Activated CD4-positive, alpha-beta memory T cell treated with anti-CD3 and anti-CD28 coated beads, Interleukin-2, amount 10 ng/mL, durations not matched to agents 7 days and 5 days (primary cell): ENCODE measurements at regions of chr11 and their contacts with region 1.

Region 1: DNA sequence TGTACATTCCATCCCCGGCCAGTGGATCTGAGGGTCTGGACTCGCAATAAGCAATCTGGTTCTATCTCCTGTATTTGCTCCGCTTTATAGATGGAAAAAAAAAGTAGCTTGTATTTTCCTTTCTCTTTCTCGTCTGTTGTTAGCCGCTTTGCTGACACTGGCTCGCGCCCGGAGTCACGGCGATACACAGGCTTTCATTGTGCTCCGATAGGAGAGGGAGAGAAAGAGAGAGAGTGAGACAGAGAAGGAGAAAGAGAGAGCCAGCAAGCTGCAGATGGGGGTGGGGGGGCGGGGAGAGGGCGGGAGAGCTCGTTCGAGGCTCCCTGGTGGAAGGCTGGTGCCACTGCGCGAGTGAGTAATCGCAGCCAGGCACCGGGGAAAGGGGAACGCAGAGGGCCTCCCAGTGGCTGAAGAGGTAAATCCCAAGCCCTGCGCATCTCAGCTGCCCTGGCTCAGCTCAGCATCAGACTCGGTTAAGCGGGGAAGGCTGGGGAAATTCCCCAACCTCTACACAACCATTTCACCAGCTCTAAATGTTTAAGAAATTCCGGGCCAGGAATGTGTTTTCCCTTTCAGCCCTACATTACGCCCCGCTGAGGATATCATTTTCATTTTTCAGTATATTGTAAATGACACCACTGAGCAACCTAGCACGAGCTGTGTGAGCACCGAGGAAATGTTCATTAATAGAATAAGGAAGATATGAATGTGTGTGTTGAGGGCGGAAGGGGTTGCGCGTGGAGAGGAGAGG is at the start of gene MAML2:
- DNase-seq: peak; percentile 93
- H3K4me3 Mint-ChIP-seq: peak within 1 kb of the TSS; percentile 97
- H3K27ac Mint-ChIP-seq: peak within 1 kb of the TSS; percentile 88
- H3K4me1 Mint-ChIP-seq: peaks cover 28% of the 10 kb centered on the region
- H3K27me3 Mint-ChIP-seq: no peaks in the 10 kb centered on the region
- total RNA-seq, gene MAML2: 19.2 to 19.3 TPM

Region 2: GRCh38 chr11:95829580-95830259 is 513.4 kb before region 1 on chr11:
- CTCF ChIA-PET with region 1: interaction called, 35 read pairs
- POLR2A ChIA-PET with region 1: no interaction called
- DNase-seq: no peak
- H3K4me3 Mint-ChIP-seq: no peak overlapping the region
- H3K27ac Mint-ChIP-seq: no peak overlapping the region
- H3K4me1 Mint-ChIP-seq: peaks cover 3% of the 10 kb centered on the region
- H3K27me3 Mint-ChIP-seq: no peaks in the 10 kb centered on the region

Region 3: GRCh38 chr11:95891423-95892177 is 451.5 kb before region 1 on chr11:
- CTCF ChIA-PET with region 1: no interaction called
- POLR2A ChIA-PET with region 1: no interaction called
- DNase-seq: no peak
- H3K4me3 Mint-ChIP-seq: no peak overlapping the region
- H3K27ac Mint-ChIP-seq: no peak overlapping the region
- H3K4me1 Mint-ChIP-seq: no peaks in the 10 kb centered on the region
- H3K27me3 Mint-ChIP-seq: no peaks in the 10 kb centered on the region

Region 4: DNA sequence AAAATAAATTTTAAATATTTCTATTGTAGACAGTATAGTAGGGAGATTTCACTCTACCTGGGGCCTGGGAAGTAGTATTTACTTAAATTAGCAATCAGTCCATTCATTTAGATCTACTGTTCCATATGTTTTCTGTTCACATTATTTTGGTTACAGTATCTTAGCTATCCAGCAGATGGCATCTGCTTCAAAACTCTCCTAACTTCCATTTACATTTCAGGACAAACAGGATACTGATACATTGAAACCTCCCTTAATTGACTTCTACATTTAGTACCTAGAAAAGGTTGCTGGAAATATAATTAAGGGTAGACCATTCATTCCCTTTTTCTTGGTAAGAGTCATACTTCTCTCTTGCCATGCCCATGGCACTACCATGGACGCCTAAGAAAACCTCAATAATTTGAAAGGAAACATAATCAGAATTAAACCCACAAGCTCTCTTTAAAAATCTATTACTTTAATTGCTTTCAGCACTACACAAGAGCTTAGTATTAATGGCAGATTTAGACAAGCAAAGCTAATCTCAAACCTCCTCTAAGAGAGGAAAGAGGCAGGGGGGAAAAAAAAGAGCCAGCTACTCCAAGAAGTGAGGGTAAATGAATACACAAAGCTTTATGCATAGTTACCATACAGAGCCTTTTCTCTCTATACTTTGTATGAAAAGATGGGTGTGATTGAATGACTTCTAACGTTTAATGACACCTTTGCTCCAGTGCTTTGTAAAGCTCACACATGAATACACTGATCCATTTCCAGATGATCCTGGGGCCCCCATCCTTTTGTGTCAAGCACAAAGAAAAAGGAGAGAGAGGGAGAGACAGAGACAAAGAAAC is 288.0 kb before region 1 on chr11:
- CTCF ChIA-PET with region 1: interaction called, 138 read pairs
- POLR2A ChIA-PET with region 1: interaction called, 13 read pairs
- DNase-seq: no peak
- H3K4me3 Mint-ChIP-seq: no peak overlapping the region
- H3K27ac Mint-ChIP-seq: no peak overlapping the region
- H3K4me1 Mint-ChIP-seq: peaks cover 41% of the 10 kb centered on the region
- H3K27me3 Mint-ChIP-seq: no peaks in the 10 kb centered on the region

Region 5: DNA sequence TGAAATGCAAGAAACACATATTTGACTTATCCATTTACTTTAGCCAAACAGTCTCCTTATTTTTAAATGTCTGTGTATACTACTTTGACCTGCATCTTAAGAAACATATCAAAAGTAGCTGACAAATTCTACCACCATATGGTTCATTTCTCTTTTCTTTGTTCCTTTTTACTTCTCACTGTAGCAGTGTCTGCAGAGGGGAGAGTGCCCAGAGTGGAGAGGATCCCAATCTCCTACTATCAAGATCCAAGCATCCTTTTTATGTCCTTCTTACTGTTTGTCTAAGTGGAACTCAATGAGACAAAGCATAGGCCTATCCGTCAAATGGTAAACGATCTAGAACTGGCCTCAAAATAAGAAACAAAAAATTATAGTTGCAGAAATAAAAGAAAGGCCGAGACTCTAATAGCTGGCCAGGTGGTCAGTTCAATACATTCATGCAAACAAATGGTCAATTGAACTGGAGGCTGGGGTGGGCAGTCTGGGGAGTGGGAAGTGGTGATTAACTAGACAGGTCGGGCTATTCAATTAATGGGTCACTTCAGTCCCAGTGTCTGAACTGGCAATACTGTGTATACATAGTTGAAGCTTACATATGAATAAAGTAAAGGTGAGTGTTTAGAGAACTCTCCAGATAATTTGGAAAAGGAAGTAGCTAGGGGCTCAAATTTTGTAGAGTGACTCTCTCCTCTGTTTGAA is 149.2 kb before region 1 on chr11:
- CTCF ChIA-PET with region 1: interaction called, 24 read pairs
- POLR2A ChIA-PET with region 1: interaction called, 7 read pairs
- DNase-seq: no peak
- H3K4me3 Mint-ChIP-seq: no peak overlapping the region
- H3K27ac Mint-ChIP-seq: peak overlapping the region; percentile 58
- H3K4me1 Mint-ChIP-seq: peaks cover 71% of the 10 kb centered on the region
- H3K27me3 Mint-ChIP-seq: no peaks in the 10 kb centered on the region

Region 6: DNA sequence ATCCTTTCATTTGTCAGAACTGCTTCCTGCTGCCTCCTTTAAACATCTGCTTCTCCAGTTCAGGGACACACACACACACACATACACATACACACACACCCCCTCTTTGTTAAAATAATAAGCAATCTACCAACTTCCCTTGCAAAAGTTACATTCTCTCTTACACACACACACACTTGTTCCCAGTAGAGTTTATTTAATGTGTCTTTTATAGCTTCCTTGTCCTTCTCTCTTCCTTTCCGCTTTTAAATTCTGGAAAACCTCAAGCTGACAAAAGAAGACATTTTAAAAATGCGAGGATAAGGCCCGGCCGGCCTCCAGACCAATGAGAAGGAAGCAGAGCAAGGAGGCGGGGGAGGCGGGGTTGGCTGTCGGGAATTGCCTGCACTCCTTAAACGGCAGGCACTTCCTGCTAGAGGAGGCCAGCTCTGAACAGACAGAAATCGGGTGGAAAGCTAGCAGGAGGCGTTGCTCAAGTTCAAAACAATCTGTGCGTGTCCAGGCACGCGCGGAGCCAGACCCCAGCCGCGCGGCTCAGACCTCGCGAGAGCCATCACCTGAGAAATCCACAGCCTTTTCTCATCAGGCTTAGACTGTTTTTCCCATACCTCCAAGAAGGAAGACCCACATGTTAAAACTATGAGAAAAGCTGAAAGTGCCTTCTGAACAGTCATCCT is 100.0 kb before region 1 on chr11:
- CTCF ChIA-PET with region 1: interaction called, 146 read pairs
- POLR2A ChIA-PET with region 1: interaction called, 73 read pairs
- DNase-seq: peak; percentile 78
- H3K4me3 Mint-ChIP-seq: peak overlapping the region; percentile 70
- H3K27ac Mint-ChIP-seq: peak overlapping the region; percentile 79
- H3K4me1 Mint-ChIP-seq: peaks cover 54% of the 10 kb centered on the region
- H3K27me3 Mint-ChIP-seq: no peaks in the 10 kb centered on the region

Region 7: DNA sequence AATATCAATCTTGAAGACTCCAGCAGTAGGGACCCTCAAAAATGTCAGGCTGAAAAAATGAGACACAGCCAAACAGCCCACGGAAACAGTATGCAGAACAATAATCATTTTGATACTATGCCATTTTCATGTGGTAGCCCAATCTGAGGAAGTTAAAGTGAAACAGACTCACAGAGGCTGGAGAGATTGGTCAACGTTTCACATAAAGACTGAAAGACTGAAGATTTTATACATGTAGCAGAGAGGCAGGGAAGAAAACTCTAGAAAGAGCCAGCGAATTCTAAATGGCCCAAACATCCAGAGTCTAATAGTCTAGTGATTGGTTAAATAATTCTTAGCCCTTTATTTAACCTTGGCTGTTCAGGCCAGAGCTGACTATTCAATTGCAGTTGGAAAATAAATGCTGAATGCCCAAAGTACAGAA is 49.5 kb before region 1 on chr11:
- CTCF ChIA-PET with region 1: interaction called, 18 read pairs
- POLR2A ChIA-PET with region 1: interaction called, 4 read pairs
- DNase-seq: no peak
- H3K4me3 Mint-ChIP-seq: peak overlapping the region; percentile 30
- H3K27ac Mint-ChIP-seq: peak overlapping the region; percentile 13
- H3K4me1 Mint-ChIP-seq: peaks cover 49% of the 10 kb centered on the region
- H3K27me3 Mint-ChIP-seq: no peaks in the 10 kb centered on the region

Region 8: GRCh38 chr11:96357794-96358193 is 14.7 kb after region 1 on chr11:
- CTCF ChIA-PET with region 1: interaction called, 16 read pairs
- POLR2A ChIA-PET with region 1: interaction called, 8 read pairs
- DNase-seq: no peak
- H3K4me3 Mint-ChIP-seq: no peak overlapping the region
- H3K27ac Mint-ChIP-seq: no peak overlapping the region
- H3K4me1 Mint-ChIP-seq: peaks cover 21% of the 10 kb centered on the region
- H3K27me3 Mint-ChIP-seq: no peaks in the 10 kb centered on the region